Sigmoid colon (tissue), 7 donors: ENCODE measurements at regions of chrX and their contacts with region 1.

Region 1: GRCh38 chrX:102652031-102652688 is 877 bp downstream of the GPRASP1 start:
- DNase-seq: peak; percentile 83
- H3K4me3 ChIP-seq: peak overlapping the region; percentile 65 to 73 (median 68)
- H3K27ac ChIP-seq: peak overlapping the region; percentile 80 to 89 (median 85)
- H3K4me1 ChIP-seq: peaks cover 0 to 18% (median 3%) of the 10 kb centered on the region in 4 donors
- H3K27me3 ChIP-seq: no peaks in the 10 kb centered on the region
- CTCF ChIP-seq: peak; percentile 30 to 57 (median 47)
- EP300 ChIP-seq: no peak
- POLR2A ChIP-seq: no peak

Region 2: DNA sequence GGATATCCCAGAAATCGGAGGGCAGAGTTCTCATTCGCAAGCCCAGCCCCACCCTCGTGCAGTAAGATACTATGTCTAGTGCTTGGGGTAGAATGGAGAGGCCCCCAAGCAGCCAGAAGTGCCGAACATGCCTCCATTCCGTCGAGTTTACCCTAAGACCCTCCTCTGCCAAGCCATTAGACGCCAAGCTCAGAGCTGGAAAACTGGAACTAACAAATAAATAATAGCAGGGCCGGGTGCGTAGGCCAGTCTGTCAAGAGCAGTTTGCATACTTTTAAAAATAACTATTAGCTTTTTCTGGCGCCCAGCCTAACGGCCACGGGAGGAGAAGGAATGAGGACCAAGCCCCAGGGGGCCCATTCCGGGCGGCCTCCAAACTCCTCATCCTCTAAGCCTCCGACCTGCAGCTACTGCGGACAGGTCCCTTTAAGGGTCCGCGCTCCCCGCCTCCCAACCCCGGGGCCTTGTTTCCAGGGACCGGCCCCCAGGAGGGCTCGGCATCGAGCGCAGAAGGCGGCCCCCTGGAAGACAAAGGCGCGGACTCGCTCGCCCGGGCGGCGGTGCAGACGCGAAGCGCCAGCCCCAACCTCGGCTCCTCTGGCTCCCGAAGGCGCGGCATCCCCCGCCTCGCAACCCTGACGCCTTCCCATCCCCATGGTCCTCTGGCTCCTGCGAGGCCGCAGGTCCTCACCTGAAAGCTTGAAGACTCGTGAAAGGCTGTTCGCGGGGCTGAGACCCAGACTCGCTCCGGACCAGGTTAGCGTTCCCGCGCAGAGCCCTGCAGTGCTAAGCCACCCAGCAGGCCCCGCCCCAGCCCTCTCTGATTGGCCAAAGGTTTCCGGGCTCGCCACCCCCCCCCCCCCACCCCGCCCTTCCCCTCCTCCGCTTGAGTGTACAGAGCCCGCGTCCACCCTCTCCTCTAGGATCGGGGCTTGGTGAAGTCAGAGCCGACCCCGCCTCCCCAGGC is 135.9 kb before region 1 on chrX and contains the start of gene TMSB15A:
- intact Hi-C with region 1: loop called (anchors 5 kb)
- DNase-seq: peak; percentile 79
- H3K4me3 ChIP-seq: peak within 1 kb of the TSS; percentile 15 to 52 (median 45)
- H3K27ac ChIP-seq: peak within 1 kb of the TSS in 2 of 4 donors; percentile 31 to 49
- H3K4me1 ChIP-seq: peaks cover 0 to 9% (median 3%) of the 10 kb centered on the region in 4 donors
- H3K27me3 ChIP-seq: peaks cover 0 to 4% (median 0%) of the 10 kb centered on the region in 3 donors
- CTCF ChIP-seq: no peak
- EP300 ChIP-seq: no peak
- POLR2A ChIP-seq: no peak
- total RNA-seq, gene TMSB15A: 0.99 to 3.6 TPM in 2 of 4 donors, not detected in the others

Region 3: DNA sequence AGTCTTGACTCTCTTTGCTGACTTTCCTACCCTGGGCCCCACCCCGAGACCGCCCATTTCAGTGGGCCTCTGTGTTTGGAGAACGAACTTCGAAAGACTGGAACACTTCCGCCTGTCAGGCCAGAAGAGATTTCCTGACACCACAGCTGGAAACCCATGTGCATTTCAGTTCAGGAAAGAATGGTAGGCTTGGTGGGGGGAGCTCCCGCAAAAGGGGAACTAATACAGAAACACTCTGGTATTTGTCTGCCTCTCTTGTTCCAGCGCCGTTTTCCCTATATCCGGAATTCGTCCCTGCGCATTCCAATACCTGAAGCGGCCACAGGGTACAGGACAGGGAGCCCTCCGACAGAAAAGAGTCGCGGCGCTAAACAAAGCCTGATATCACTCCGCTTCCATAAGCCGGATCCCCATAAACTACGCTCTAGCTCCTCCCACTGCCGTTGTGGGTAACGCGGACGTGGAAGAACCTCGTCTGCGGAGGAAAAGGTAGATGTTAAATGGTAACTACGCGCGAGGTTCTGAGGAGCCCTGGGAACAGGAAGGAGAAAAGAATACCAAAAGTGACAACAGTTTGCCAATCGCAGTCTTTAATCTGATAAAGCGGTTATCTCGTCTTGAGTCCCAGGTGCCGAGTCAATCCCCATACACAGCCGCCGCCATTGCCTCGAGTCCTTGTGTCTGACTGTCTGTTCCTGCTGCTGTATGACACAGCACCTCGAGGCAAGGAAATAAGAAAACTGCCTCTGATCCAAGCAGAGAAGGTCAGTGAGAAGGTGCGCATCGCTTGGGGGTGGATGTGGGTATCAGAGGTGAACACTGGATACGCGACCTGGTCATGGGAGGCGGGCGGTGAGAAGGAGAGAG is 52.8 kb before region 1 on chrX and contains the start of gene ARMCX5:
- intact Hi-C with region 1: loop called (anchors 1 kb)
- DNase-seq: peak; percentile 83
- H3K4me3 ChIP-seq: peak within 1 kb of the TSS; percentile 37 to 59 (median 54)
- H3K27ac ChIP-seq: peak within 1 kb of the TSS; percentile 75 to 80 (median 76)
- H3K4me1 ChIP-seq: peaks cover 0 to 4% (median 0%) of the 10 kb centered on the region in 4 donors
- H3K27me3 ChIP-seq: no peaks in the 10 kb centered on the region
- CTCF ChIP-seq: peak in 2 of 4 experiments; percentile 13 to 21
- EP300 ChIP-seq: no peak
- POLR2A ChIP-seq: peak; percentile 27 to 41
- total RNA-seq, gene ARMCX5: 5.0 to 10.0 (median 6.9) TPM

Region 4: DNA sequence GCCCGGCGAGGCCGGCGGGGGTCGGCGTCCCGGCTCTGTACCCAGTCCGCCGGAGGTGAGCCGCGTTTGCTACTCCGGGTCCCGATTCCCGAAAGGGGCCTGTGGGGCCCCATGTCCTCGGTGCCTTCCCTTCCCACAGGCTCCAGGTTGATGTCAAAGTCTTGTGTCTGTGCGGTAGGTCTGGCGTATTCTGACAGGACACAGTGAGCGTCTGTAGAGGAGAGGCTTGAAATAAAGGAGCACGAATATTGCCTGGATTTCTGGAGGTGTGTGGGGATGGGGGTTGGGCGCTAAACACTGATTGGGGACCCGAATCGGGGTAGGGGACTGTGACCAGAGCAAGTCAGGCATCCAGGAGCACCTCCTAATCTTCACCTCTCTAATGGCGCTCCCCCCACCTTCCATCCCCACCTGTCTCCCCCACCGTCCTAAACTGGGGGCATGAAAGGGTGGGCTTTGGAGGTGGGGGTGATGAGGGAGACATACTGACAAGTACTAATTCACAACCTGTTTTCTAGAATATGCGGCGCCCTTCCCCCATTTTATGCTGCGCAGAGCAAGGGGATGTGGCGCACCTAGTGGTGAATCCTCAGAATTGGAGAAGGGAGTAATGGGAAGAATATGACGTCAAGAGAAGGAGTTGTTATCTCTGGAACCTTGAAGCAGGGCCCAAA is 60.9 kb after region 1 on chrX:
- intact Hi-C with region 1: loop called (anchors 2 kb)
- DNase-seq: peak; percentile 88
- H3K4me3 ChIP-seq: peak overlapping the region; percentile 56 to 75 (median 60)
- H3K27ac ChIP-seq: peak overlapping the region; percentile 82 to 92 (median 87)
- H3K4me1 ChIP-seq: peaks cover 0 to 6% (median 2%) of the 10 kb centered on the region in 4 donors
- H3K27me3 ChIP-seq: peaks cover 0 to 2% (median 0%) of the 10 kb centered on the region in 3 donors
- CTCF ChIP-seq: peak; percentile 29 to 55 (median 53)
- EP300 ChIP-seq: no peak
- POLR2A ChIP-seq: no peak

Region 5: GRCh38 chrX:102768987-102769761 is 117.0 kb after region 1 on chrX:
- intact Hi-C with region 1: loop called (anchors 5 kb)
- DNase-seq: peak; percentile 90
- H3K4me3 ChIP-seq: peak overlapping the region; percentile 30 to 56 (median 53)
- H3K27ac ChIP-seq: peak overlapping the region; percentile 46 to 69 (median 60)
- H3K4me1 ChIP-seq: peaks cover 0 to 19% (median 5%) of the 10 kb centered on the region in 4 donors
- H3K27me3 ChIP-seq: no peaks in the 10 kb centered on the region
- CTCF ChIP-seq: no peak
- EP300 ChIP-seq: no peak
- POLR2A ChIP-seq: no peak